ENCODE measurements at regions of chr9 and their contacts with region 1.

Region 1: DNA sequence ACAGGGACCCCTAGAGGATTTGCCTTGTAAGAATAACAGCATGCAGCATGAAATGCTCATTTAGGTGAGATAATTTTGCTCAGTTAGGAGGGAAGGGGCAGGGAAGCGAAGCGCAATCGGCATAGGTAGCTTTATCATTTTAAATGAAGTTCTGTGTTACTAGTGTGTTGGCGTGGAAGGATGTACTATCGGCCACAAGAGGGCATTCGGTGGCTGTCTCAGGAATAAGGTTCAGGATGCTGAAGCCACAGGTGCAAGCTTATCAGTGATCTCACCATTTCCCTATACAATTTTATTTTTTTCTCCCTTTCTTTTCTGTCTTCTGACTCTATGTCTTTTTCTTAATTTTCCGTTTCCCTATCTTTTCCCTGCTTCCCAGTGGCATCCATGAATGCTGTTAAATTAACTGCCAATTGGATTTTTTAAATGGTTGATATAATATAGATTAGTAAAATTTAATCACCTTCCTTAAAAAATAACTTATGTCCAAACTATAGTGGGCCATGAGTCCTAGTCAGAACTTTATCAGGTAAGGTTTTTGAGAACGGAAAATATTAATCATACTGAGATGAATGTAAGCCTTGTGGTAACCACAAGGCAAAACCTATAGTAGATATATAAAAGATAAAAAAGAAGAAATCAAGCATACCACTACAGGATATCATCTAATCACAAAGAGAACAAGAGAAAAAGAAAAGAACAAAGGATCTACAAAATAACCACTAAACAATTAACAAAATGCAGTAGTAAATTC is 1.2 kb upstream of the INSL6 start:
- DNase-seq: peak in 2 of 3 donors; percentile 39 to 75
- ATAC-seq: peak; percentile 88
- H3K4me3 ChIP-seq: no peak overlapping the region
- H3K4me1 ChIP-seq: no peaks in the 10 kb centered on the region
- CTCF ChIP-seq: peak; percentile 48

Region 2: DNA sequence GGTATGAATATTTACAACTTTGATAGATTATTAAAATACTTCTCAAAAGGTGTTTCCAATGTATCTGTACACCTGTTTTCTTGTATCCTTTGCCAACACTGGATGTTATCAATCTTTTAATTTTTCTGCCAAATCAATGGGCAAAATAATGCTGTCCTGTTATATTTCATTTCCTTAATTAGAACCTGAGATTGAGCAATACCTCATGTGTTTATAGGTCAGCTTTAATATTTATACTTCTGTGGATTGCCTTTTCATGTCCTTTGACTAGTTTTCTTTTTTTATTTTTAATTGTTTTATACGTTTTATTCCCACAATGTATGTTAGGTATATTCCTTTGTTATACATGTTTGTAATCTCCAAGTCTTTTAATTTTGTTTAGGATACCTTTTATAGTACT is 124.0 kb before region 1 on chr9:
- intact Hi-C with region 1: no loop called
- DNase-seq: no peak
- ATAC-seq: no peak
- H3K4me3 ChIP-seq: no peak overlapping the region
- H3K4me1 ChIP-seq: no peaks in the 10 kb centered on the region
- CTCF ChIP-seq: no peak

Region 3: GRCh38 chr9:5425006-5425628 is 238.5 kb after region 1 on chr9:
- intact Hi-C with region 1: loop called in 1 of 2 experiments (anchors 10 kb)
- DNase-seq: no peak
- ATAC-seq: peak; percentile 63
- H3K4me3 ChIP-seq: no peak overlapping the region
- H3K4me1 ChIP-seq: no peaks in the 10 kb centered on the region
- CTCF ChIP-seq: no peak